ENCODE measurements at regions of chr3 and their contacts with region 1.

Region 1: DNA sequence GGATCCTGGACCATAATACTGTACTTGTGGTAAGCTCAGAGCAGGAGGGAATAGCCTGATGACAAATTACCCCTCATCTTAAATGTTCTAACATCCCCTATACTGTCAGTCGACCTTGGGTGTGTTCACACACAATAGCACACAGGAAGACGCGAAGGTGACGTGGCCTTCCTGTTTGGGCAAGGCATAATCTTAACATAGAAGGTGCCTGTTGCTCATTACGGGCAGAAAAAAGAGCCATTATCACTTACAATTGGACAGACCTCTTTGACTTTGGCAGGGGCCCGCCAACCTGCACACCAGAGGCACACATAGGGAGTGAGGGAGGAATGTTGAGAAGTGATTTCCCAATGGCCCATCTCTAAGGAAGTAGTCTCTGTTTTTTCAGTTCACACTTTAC is 144.2 kb downstream of the ANO10 start:
- DNase-seq: peak; percentile 69 to 89
- ATAC-seq: peak; percentile 90 to 98 (median 98)
- H3K4me3 ChIP-seq: no peak overlapping the region
- H3K4me3 Mint-ChIP-seq: peak overlapping the region; percentile 60
- H3K27ac ChIP-seq: peak overlapping the region; percentile 97
- H3K27ac Mint-ChIP-seq: peak overlapping the region; percentile 96 to 98
- H3K4me1 ChIP-seq: peaks cover 26% of the 10 kb centered on the region
- H3K4me1 Mint-ChIP-seq: peaks cover 63 to 65% of the 10 kb centered on the region in 2 donors
- H3K27me3 ChIP-seq: no peaks in the 10 kb centered on the region
- H3K27me3 Mint-ChIP-seq: no peaks in the 10 kb centered on the region
- CTCF ChIP-seq: no peak

Region 2: DNA sequence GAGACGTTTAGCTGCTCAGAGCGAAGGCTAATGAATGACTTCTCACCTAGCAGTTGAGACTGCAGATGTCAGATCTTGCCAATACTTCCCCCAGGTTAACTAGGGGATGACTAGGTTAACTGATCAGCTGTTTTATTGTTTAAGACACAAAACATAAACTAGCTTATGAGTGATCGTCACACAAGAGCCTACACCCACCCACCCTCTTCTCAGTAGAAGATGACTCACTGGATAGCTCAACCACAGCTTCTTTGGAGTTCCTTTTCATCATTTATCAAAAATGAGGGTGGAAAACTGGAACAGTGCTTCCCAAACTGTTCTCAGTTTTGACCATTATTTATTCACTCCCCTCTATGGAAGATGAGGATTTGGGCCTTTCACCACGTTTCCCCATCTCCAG is 473.3 kb before region 1 on chr3:
- intact Hi-C with region 1: no loop called
- DNase-seq: no peak
- ATAC-seq: no peak
- H3K4me3 ChIP-seq: no peak overlapping the region
- H3K4me3 Mint-ChIP-seq: no peak overlapping the region
- H3K27ac ChIP-seq: no peak overlapping the region
- H3K27ac Mint-ChIP-seq: no peak overlapping the region
- H3K4me1 ChIP-seq: no peaks in the 10 kb centered on the region
- H3K4me1 Mint-ChIP-seq: no peaks in the 10 kb centered on the region
- H3K27me3 ChIP-seq: no peaks in the 10 kb centered on the region
- H3K27me3 Mint-ChIP-seq: peaks cover 0 to 8% of the 10 kb centered on the region in 2 donors
- CTCF ChIP-seq: no peak

Region 3: DNA sequence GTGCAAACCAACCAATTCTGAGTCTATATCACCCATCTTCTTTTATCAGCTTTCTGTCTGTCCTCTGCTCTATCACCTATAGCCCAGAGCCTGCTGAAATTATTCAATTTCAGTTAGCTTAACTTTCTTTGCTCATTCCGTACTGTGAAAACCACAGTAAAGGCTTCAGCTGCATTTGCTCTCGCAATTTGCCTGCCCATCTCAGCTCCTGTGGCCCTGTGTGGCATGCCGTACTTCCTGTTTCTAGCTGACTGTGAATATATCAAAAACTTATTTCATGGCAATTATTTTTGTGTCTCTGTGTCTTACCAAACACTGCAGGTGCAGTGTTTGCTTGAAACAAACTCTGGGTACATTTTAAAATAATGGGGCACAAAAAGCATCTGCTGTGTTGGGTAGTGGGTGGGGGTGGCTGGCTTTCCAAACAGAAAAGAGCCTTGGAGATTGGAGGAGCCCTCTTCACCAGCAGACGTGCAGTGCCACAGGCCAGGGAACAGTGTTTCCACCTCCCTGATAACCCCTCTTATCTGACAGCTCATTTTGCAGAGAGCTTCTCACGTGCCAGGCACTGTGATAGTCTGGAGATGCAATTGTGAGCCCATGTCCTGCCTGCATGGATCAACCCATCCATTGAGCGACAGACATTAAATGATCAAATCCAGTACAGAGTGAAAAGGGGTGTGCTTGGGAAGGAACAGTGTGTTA is 453.3 kb before region 1 on chr3:
- intact Hi-C with region 1: loop called (anchors 5 kb)
- DNase-seq: peak; percentile 41 to 78
- ATAC-seq: peak; percentile 88 to 93 (median 88)
- H3K4me3 ChIP-seq: peak overlapping the region; percentile 6
- H3K4me3 Mint-ChIP-seq: peak overlapping the region; percentile 78
- H3K27ac ChIP-seq: peak overlapping the region; percentile 65
- H3K27ac Mint-ChIP-seq: peak overlapping the region; percentile 72 to 84
- H3K4me1 ChIP-seq: peaks cover 48% of the 10 kb centered on the region
- H3K4me1 Mint-ChIP-seq: peaks cover 51 to 63% of the 10 kb centered on the region in 2 donors
- H3K27me3 ChIP-seq: no peaks in the 10 kb centered on the region
- H3K27me3 Mint-ChIP-seq: no peaks in the 10 kb centered on the region
- CTCF ChIP-seq: no peak

Region 4: GRCh38 chr3:43389388-43390254 is 88.0 kb before region 1 on chr3:
- intact Hi-C with region 1: loop called (anchors 2 kb)
- DNase-seq: peak; percentile 45 to 90
- ATAC-seq: peak; percentile 83 to 91 (median 90)
- H3K4me3 ChIP-seq: no peak overlapping the region
- H3K4me3 Mint-ChIP-seq: peak overlapping the region; percentile 67
- H3K27ac ChIP-seq: peak overlapping the region; percentile 96
- H3K27ac Mint-ChIP-seq: peak overlapping the region; percentile 89 to 94
- H3K4me1 ChIP-seq: peaks cover 41% of the 10 kb centered on the region
- H3K4me1 Mint-ChIP-seq: peaks cover 80 to 82% of the 10 kb centered on the region in 2 donors
- H3K27me3 ChIP-seq: no peaks in the 10 kb centered on the region
- H3K27me3 Mint-ChIP-seq: no peaks in the 10 kb centered on the region
- CTCF ChIP-seq: no peak

Region 5: GRCh38 chr3:43503067-43503728 is 25.6 kb after region 1 on chr3:
- intact Hi-C with region 1: loop called (anchors 2 kb)
- DNase-seq: peak in 1 of 2 donors; percentile 70
- ATAC-seq: peak; percentile 60 to 81 (median 77)
- H3K4me3 ChIP-seq: no peak overlapping the region
- H3K4me3 Mint-ChIP-seq: peak overlapping the region; percentile 10
- H3K27ac ChIP-seq: no peak overlapping the region
- H3K27ac Mint-ChIP-seq: peak overlapping the region; percentile 62 to 67
- H3K4me1 ChIP-seq: peaks cover 13% of the 10 kb centered on the region
- H3K4me1 Mint-ChIP-seq: peaks cover 47 to 48% of the 10 kb centered on the region in 2 donors
- H3K27me3 ChIP-seq: no peaks in the 10 kb centered on the region
- H3K27me3 Mint-ChIP-seq: no peaks in the 10 kb centered on the region
- CTCF ChIP-seq: peak; percentile 85

Region 6: GRCh38 chr3:43540624-43541023 is 63.0 kb after region 1 on chr3:
- intact Hi-C with region 1: no loop called
- DNase-seq: no peak
- ATAC-seq: no peak
- H3K4me3 ChIP-seq: no peak overlapping the region
- H3K4me3 Mint-ChIP-seq: no peak overlapping the region
- H3K27ac ChIP-seq: no peak overlapping the region
- H3K27ac Mint-ChIP-seq: no peak overlapping the region
- H3K4me1 ChIP-seq: no peaks in the 10 kb centered on the region
- H3K4me1 Mint-ChIP-seq: no peaks in the 10 kb centered on the region
- H3K27me3 ChIP-seq: no peaks in the 10 kb centered on the region
- H3K27me3 Mint-ChIP-seq: no peaks in the 10 kb centered on the region
- CTCF ChIP-seq: no peak